ENCODE measurements at regions of chr11 and their contacts with region 1.

Region 1: DNA sequence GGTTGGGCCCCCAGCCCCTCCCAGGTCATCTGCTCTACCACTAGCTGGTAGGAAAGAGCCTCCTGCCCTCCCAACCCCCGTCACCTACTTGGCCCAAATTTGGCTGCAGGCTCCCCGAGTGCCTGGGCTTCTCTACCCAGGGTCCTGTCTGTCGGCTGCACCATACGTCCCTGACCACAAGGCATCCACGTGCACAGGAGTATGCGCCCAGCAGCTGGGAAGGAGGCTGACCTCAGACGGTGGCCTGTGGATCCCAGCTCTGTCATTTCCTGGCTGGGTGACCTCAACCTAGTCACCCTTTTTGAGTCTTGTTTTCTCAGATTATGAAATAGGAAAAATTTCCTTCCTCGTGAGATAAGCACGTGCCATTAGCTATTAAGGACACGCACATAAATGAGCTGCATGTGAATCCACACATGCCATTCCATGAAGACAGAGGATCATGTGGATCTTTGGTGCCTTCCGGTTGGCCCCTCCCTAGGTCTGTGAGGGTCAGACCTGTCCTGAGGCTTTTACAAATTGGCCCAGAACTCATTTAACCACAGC is 13.7 kb downstream of the CYB561A3 start:
- DNase-seq: no peak
- H3K4me3 ChIP-seq: no peak overlapping the region
- H3K27ac ChIP-seq: no peak overlapping the region
- H3K4me1 ChIP-seq: no peaks in the 10 kb centered on the region
- H3K27me3 ChIP-seq: no peaks in the 10 kb centered on the region
- CTCF ChIP-seq: no peak
- EP300 ChIP-seq: no peak
- POLR2A ChIP-seq: no peak; a peak in 1 of 3 replicates
- RAD21 ChIP-seq: no peak

Region 2: DNA sequence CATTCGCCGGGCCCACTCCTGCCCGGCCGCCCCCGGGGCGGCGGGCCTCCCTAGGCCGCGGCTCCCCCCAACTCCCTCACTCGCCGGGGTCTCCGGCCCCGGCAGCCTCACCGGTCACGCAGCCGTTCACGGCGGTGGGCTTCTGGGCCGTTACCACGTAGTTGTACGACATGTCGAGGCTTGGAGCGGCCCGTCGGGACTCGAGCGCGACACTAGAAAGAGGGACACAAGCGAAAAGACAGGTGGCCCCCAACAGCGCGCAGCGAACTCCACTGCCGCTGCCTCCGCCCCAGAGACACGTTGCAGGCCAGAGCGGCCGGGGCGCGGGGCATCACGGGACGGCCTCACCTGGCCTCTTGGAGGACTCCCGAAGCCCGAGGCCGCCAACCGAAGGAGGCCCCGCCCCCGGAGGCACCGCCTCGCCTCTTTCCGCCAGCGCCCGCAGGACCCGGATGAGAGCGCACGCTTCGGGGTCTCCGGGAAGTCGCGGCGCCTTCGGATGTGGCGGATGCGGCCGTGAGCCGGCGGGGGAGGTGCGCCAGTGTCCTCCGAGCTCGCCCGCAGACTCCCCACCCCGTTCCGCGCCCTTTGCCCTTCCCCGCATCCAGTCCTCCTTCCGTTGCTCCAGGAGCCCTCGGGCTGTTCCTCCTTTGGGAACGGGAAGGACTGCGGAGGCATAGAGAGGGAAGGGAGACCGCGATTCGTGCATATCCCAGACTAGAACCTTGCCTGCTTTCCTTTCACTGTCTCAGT is 15.0 kb before region 1 on chr11 and contains the starts of genes DDB1 and TKFC:
- CTCF ChIA-PET with region 1: interaction called, 255 read pairs
- POLR2A ChIA-PET with region 1: interaction called, 1,106 read pairs
- DNase-seq: peak; percentile 84 to 99
- H3K4me3 ChIP-seq: peak within 1 kb of the TSS; percentile 79 to 96 (median 92)
- H3K27ac ChIP-seq: peak within 1 kb of the TSS; percentile 96
- H3K4me1 ChIP-seq: peaks cover 5 to 14% (median 9%) of the 10 kb centered on the region in 4 experiments
- H3K27me3 ChIP-seq: no peaks in the 10 kb centered on the region
- CTCF ChIP-seq: no peak
- EP300 ChIP-seq: no peak
- POLR2A ChIP-seq: peak; percentile 94 to 96
- RAD21 ChIP-seq: no peak
- total RNA-seq, gene DDB1: 275 and 283 TPM in 2 replicates
- total RNA-seq, gene TKFC: 53.5 and 56.0 TPM in 2 replicates

Region 3: GRCh38 chr11:61477727-61478148 is 129.7 kb after region 1 on chr11:
- CTCF ChIA-PET with region 1: no interaction called
- POLR2A ChIA-PET with region 1: no interaction called
- DNase-seq: peak; percentile 47 to 94
- H3K4me3 ChIP-seq: no peak overlapping the region
- H3K27ac ChIP-seq: no peak overlapping the region
- H3K4me1 ChIP-seq: peaks cover 0 to 16% (median 8%) of the 10 kb centered on the region in 4 experiments; a peak in 5 of 7 replicates
- H3K27me3 ChIP-seq: no peaks in the 10 kb centered on the region
- CTCF ChIP-seq: peak; percentile 78 to 97 (median 89)
- EP300 ChIP-seq: no peak
- POLR2A ChIP-seq: no peak
- RAD21 ChIP-seq: peak; percentile 94 to 96

Region 4: GRCh38 chr11:61581030-61581928 is 233.3 kb after region 1 on chr11 and contains the start of gene SYT7:
- CTCF ChIA-PET with region 1: no interaction called
- POLR2A ChIA-PET with region 1: no interaction called
- DNase-seq: peak; percentile 89 to 100
- H3K4me3 ChIP-seq: peak within 1 kb of the TSS; percentile 46 to 85 (median 64)
- H3K27ac ChIP-seq: no peak within 1 kb of the TSS
- H3K4me1 ChIP-seq: peaks cover 4 to 41% (median 31%) of the 10 kb centered on the region in 4 experiments
- H3K27me3 ChIP-seq: peaks cover 2 to 32% (median 26%) of the 10 kb centered on the region in 4 experiments
- CTCF ChIP-seq: peak in 1 of 3 experiments; percentile 9; a peak in 1 of 4 replicates
- EP300 ChIP-seq: peak in 1 of 2 experiments; percentile 67; a peak in 1 of 3 replicates
- POLR2A ChIP-seq: no peak
- RAD21 ChIP-seq: peak; percentile 1 to 9; a peak in 1 of 4 replicates
- total RNA-seq, gene SYT7: 10.5 and 10.6 TPM in 2 replicates